T-cell (primary cell): ENCODE measurements at regions of chr11 and their contacts with region 1.

Region 1: DNA sequence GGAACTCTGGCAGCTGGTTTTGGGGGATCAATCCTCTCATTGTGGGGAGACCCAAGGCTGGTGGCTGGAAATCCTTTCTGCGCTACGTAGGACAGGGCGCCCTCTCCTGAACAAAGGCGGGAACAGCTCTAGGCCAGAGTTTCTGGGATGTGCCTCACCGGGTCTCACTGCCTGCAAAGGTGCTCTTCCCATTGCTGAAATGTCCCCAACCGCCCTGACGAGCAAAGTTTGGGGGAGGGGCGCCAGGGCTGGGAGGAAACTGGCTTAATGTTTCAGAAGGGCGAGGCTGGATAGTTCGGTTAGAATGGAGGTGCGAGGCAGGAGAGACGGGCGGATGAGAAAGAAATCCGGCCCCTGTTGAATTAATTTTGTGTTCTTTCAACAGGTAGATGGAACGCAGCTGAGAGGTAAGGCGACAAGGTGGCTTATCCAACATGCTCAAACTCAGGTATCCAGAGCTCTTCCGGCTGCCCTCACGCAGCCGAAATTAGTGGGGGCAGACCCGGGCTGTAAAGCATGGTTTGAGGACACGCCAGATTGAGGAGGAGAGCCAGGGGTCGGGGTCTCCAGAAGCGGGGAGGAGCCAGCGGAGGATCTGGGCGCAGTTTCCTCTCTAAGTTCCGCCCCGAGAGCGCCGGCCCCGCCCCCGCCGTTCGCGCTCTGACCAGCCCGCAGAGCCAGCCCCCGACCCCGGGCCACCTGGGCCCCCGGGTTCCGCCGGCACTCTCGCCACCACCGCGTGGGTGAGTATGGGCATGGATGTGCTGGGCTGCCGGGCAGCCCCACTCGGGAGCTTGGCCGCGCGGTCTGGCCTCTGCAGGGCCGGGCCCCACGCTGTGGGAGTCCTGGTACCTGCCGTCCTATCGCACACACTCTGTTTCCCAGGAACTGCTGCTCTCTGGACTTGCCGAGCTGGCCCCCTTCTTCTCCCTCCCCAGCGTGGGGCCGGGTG is at the start of gene PGAP2:
- DNase-seq: peak; percentile 20 to 74 (median 42)
- ATAC-seq: peak; percentile 76 to 81 (median 77)
- H3K4me3 ChIP-seq: peak within 1 kb of the TSS; percentile 86 to 89
- H3K4me3 Mint-ChIP-seq: peak within 1 kb of the TSS; percentile 94 to 99 (median 98)
- H3K27ac ChIP-seq: peak within 1 kb of the TSS; percentile 56
- H3K27ac Mint-ChIP-seq: peak within 1 kb of the TSS; percentile 91 to 93
- H3K4me1 ChIP-seq: peaks cover 0 to 16% of the 10 kb centered on the region in 2 experiments
- H3K4me1 Mint-ChIP-seq: peaks cover 16 to 20% (median 17%) of the 10 kb centered on the region in 3 donors
- H3K27me3 ChIP-seq: no peaks in the 10 kb centered on the region
- H3K27me3 Mint-ChIP-seq: no peaks in the 10 kb centered on the region
- total RNA-seq, gene PGAP2: 22.5 to 28.2 (median 24.6) TPM

Region 2: DNA sequence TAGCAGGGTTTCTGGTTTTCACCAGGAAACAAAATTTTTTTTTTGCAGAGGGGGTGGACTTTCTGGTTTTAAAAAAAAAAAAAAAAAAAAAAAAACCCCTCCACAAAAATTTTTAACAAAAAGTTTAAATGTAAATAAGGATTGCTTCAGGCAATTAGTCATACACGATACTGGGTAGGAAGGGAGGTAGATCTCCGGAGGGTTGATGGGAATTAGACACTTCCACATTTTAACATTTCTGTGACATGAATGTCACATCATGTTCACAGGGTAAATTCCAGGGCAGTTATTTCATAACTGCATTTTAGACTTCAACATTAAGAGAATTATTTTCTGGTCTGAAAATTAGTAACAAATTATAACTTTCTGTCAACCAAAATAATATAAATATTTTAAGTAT is 26.8 kb before region 1 on chr11:
- CTCF ChIA-PET with region 1: interaction called, 3 to 25 read pairs
- POLR2A ChIA-PET with region 1: interaction called, 5 to 6 read pairs
- DNase-seq: no peak
- ATAC-seq: no peak
- H3K4me3 ChIP-seq: no peak overlapping the region
- H3K4me3 Mint-ChIP-seq: no peak overlapping the region
- H3K27ac ChIP-seq: no peak overlapping the region
- H3K27ac Mint-ChIP-seq: peak overlapping the region in 1 of 2 donors; percentile 19
- H3K4me1 ChIP-seq: peaks cover 7 to 28% of the 10 kb centered on the region in 2 experiments
- H3K4me1 Mint-ChIP-seq: peaks cover 46 to 51% (median 48%) of the 10 kb centered on the region in 3 donors
- H3K27me3 ChIP-seq: no peaks in the 10 kb centered on the region
- H3K27me3 Mint-ChIP-seq: no peaks in the 10 kb centered on the region

Region 3: GRCh38 chr11:3796801-3797328 is 11.3 kb before region 1 on chr11:
- CTCF ChIA-PET with region 1: interaction called, 6 to 11 read pairs
- POLR2A ChIA-PET with region 1: interaction called, 3 to 6 read pairs
- DNase-seq: no peak
- ATAC-seq: peak; percentile 25 to 47 (median 43)
- H3K4me3 ChIP-seq: peak overlapping the region; percentile 78 to 97
- H3K4me3 Mint-ChIP-seq: peak overlapping the region; percentile 89 to 97 (median 90)
- H3K27ac ChIP-seq: peak overlapping the region; percentile 94
- H3K27ac Mint-ChIP-seq: peak overlapping the region; percentile 91 to 97
- H3K4me1 ChIP-seq: peaks cover 24 to 39% of the 10 kb centered on the region in 2 experiments
- H3K4me1 Mint-ChIP-seq: peaks cover 52 to 53% (median 52%) of the 10 kb centered on the region in 3 donors
- H3K27me3 ChIP-seq: no peaks in the 10 kb centered on the region
- H3K27me3 Mint-ChIP-seq: no peaks in the 10 kb centered on the region

Region 4: DNA sequence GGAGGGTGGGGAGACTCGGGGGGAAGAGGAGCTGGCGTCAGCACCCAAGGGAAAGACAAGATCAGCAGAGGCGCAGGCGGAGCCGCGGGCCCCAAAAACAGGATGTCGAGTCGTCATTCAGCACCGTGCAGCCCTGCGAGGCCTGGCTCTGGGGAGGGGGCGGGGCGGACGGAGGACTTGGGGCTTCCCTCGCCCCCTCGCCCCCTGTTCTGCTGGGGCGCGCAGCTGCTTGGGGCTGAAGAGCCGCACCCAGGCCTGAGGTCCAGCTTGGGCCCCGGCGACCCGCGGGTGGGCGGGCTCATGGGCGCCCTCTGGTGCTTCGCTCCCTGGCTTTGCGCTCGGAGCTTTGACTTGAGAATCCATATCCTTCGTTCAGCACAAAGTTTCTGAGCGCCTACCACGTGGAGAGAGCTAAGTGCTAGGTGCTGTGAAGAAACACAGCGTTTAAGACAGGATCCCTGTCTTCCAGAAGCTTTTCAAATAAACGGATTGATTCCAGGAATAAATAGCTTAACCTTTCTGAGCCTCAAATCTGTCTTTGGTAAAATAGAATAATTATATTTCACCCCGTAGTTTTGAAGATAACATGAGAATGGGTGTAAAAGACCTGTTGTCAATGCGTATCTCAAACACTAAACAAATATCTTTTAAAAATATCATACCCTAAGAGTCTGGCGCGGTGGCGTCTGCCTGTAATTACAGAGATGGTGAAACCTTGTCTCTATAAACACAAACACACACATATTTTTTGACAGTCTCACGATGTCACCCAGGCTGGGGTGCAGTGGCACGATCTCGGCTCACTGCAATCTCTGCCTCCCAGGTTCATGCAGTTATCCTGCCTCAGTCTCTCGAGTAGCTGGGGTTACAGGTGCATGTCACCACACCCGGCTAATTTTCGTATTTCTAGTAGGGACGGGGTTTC is 33.5 kb after region 1 on chr11:
- CTCF ChIA-PET with region 1: interaction called in 1 of 2 experiments, 11 read pairs
- POLR2A ChIA-PET with region 1: interaction called, 5 to 7 read pairs
- DNase-seq: peak in 34 of 35 experiments; percentile 88 to 98 (median 96)
- ATAC-seq: peak; percentile 77 to 82 (median 78)
- H3K4me3 ChIP-seq: peak overlapping the region in 1 of 2 donors; percentile 88
- H3K4me3 Mint-ChIP-seq: peak overlapping the region; percentile 85 to 89 (median 86)
- H3K27ac ChIP-seq: peak overlapping the region; percentile 98
- H3K27ac Mint-ChIP-seq: peak overlapping the region; percentile 96
- H3K4me1 ChIP-seq: peaks cover 44 to 48% of the 10 kb centered on the region in 2 experiments
- H3K4me1 Mint-ChIP-seq: peaks cover 56 to 60% (median 56%) of the 10 kb centered on the region in 3 donors
- H3K27me3 ChIP-seq: no peaks in the 10 kb centered on the region
- H3K27me3 Mint-ChIP-seq: no peaks in the 10 kb centered on the region

Region 5: DNA sequence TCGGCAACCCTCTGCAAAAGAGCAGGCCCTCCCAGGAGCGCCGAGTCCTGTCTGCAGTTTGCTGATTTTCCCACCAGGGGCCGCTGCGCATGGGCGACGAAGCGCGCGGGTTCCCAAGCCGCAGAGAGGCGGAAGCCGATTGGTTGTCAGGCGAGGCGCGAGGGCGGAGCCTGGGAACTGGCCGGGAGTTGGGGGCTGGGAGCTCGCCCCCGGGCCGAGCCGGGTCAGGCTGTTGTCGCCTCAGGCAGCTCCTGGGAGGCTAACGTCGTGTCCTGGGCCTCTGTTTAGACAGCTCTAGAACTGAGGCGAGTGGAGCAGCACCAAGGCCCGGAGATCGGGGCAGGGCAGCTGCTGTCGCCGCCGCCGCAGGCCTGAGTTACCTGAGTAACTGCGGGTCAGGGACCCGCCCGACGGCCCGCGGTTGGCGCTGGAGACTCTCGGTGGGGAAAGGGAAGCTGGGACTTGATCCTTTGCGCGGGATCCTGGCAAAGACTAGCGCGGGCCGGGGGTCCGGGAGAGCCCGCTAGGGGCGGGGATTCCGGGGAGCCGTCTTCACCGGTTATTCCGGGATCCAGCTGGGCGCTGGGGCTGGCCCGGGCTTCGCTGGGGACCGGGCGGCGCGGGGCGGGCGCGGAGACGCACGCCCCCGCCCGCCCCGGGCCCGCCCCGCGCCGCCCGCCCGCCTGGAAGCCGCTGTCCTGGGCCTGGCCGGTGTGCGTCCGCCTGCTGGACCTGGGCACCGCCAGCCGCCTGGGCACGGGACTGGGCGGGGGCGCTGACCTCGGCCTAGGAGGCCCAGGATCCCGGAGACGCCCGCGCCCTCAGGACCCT is 47.0 kb after region 1 on chr11 and contains the start of gene STIM1:
- CTCF ChIA-PET with region 1: interaction called in 1 of 2 experiments, 10 read pairs
- POLR2A ChIA-PET with region 1: no interaction called
- DNase-seq: peak; percentile 92 to 99 (median 97)
- ATAC-seq: peak; percentile 73 to 80 (median 74)
- H3K4me3 ChIP-seq: peak within 1 kb of the TSS; percentile 85 to 94
- H3K4me3 Mint-ChIP-seq: peak within 1 kb of the TSS; percentile 95 to 99 (median 98)
- H3K27ac ChIP-seq: peak within 1 kb of the TSS; percentile 96
- H3K27ac Mint-ChIP-seq: peak within 1 kb of the TSS; percentile 99
- H3K4me1 ChIP-seq: peaks cover 55 to 61% of the 10 kb centered on the region in 2 experiments
- H3K4me1 Mint-ChIP-seq: peaks cover 60 to 74% (median 68%) of the 10 kb centered on the region in 3 donors
- H3K27me3 ChIP-seq: no peaks in the 10 kb centered on the region
- H3K27me3 Mint-ChIP-seq: no peaks in the 10 kb centered on the region
- total RNA-seq, gene STIM1: 87.6 to 139 (median 94.5) TPM

Region 6: GRCh38 chr11:4105916-4106315 is 297.7 kb after region 1 on chr11:
- CTCF ChIA-PET with region 1: no interaction called
- POLR2A ChIA-PET with region 1: interaction called in 1 of 2 experiments, 10 read pairs
- DNase-seq: no peak
- ATAC-seq: no peak
- H3K4me3 ChIP-seq: no peak overlapping the region
- H3K4me3 Mint-ChIP-seq: no peak overlapping the region
- H3K27ac ChIP-seq: no peak overlapping the region
- H3K27ac Mint-ChIP-seq: no peak overlapping the region
- H3K4me1 ChIP-seq: no peaks in the 10 kb centered on the region
- H3K4me1 Mint-ChIP-seq: peaks cover 10 to 15% (median 11%) of the 10 kb centered on the region in 3 donors
- H3K27me3 ChIP-seq: no peaks in the 10 kb centered on the region
- H3K27me3 Mint-ChIP-seq: no peaks in the 10 kb centered on the region

Region 7: GRCh38 chr11:4115128-4115527 is 306.9 kb after region 1 on chr11:
- CTCF ChIA-PET with region 1: no interaction called
- POLR2A ChIA-PET with region 1: interaction called in 1 of 2 experiments, 19 read pairs
- DNase-seq: no peak
- ATAC-seq: no peak
- H3K4me3 ChIP-seq: no peak overlapping the region
- H3K4me3 Mint-ChIP-seq: no peak overlapping the region
- H3K27ac ChIP-seq: no peak overlapping the region
- H3K27ac Mint-ChIP-seq: no peak overlapping the region
- H3K4me1 ChIP-seq: no peaks in the 10 kb centered on the region
- H3K4me1 Mint-ChIP-seq: peaks cover 0 to 5% (median 4%) of the 10 kb centered on the region in 3 donors
- H3K27me3 ChIP-seq: no peaks in the 10 kb centered on the region
- H3K27me3 Mint-ChIP-seq: no peaks in the 10 kb centered on the region

Region 8: DNA sequence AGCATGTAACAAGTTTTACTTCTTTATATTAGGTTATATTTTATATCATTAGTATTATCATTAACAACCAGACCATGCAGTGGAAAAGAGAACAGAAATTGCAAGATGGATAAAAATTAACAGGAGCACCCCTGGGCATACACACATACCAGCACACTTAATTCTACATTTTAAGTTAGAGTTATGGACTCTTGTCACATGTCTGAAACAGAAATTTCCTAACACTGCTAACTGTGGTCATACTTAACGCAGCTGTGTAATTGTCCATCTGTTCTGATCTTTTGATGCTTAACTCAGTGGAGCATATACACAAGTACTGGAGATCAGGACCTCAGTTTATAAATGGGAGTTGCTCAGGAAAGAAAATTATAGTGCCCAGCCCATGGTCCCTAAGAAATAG is 1739.8 kb after region 1 on chr11:
- CTCF ChIA-PET with region 1: no interaction called
- POLR2A ChIA-PET with region 1: no interaction called
- DNase-seq: no peak
- ATAC-seq: no peak
- H3K4me3 ChIP-seq: no peak overlapping the region
- H3K4me3 Mint-ChIP-seq: no peak overlapping the region
- H3K27ac ChIP-seq: no peak overlapping the region
- H3K27ac Mint-ChIP-seq: no peak overlapping the region
- H3K4me1 ChIP-seq: no peaks in the 10 kb centered on the region
- H3K4me1 Mint-ChIP-seq: no peaks in the 10 kb centered on the region
- H3K27me3 ChIP-seq: no peaks in the 10 kb centered on the region
- H3K27me3 Mint-ChIP-seq: peaks cover 3 to 8% of the 10 kb centered on the region in 2 donors